Endothelial cell of umbilical vein (primary cell): ENCODE measurements at regions of chr17 and their contacts with region 1.

Region 1: DNA sequence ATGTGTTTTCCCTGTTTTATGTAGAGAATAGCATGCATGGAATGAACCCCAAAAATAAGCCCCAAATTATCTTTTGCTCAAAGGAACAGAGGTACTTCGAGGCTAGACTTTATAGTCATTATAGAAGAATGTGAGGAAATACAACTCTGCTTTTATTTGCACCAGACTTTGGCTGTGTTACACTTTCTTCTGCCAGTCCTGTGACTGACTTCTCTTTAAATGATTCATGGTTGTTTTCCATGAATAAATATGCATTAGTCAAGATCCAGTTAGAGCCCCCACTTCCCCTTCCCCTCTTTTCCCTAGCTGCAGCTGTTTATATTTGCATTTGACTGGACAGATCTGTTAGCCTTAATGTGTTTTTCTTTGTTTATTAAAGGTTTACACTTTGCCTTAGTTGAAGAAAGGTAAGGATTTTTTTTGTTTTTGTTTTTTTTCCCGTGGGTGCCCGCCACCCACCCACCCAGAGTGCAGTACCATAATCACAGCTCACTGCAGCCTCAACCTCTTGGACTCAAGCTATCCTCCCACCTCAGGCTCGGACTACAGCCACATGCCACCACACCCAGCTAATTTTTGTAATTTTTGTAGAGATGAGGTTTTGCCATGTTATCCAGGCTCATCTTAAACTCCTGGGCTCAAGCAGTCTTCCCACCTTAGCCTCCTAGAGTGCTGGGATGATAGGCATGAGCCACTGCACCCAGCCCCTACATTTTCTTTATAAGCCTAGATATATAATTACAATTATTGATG is 152.6 kb downstream of the CYB561 start:
- DNase-seq: peak; percentile 93
- H3K4me3 ChIP-seq: no peak overlapping the region
- H3K27ac ChIP-seq: peak overlapping the region; percentile 18
- H3K4me1 ChIP-seq: peaks cover 30% of the 10 kb centered on the region
- H3K27me3 ChIP-seq: no peaks in the 10 kb centered on the region
- CTCF ChIP-seq: no peak
- POLR2A ChIP-seq: no peak

Region 2: DNA sequence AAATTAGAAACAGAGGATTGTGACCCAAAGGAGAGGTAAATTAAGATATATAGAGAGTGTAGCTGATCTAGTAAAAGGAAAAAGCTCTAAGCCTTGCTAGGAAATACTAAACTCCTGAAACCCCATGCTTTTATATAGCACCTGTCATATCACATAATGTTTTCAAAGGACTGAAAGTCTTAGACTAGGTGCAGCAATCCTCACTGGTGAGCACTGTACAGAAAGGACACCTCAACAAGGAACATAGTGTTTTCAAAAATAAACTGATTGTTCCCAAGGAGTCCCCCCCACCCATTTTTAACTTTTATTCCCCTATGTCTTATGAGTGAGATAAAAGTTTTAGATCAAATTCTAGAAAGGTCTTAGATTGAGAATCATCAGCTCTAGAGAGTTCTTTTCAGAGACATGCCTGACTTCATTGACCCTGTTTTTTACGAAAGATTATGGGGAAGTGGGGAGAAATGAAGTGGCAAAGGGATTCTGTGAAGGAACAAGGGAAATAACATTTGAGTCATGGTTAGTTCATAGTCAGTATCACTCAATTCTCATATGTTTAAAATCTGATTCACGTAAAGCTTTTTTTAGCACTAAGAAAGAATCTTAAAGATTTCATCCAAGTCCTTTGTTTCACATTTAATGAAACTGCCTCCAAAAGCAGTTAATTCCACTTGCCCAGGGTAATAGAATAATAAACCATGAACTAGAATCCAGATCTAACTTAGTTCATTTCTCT is 13.8 kb before region 1 on chr17:
- CTCF ChIA-PET with region 1: interaction called, 10 read pairs
- POLR2A ChIA-PET with region 1: no interaction called
- dilution Hi-C with region 1: no loop called
- intact Hi-C with region 1: loop called (anchors 2 kb)
- DNase-seq: peak; percentile 89
- H3K4me3 ChIP-seq: no peak overlapping the region
- H3K27ac ChIP-seq: peak overlapping the region; percentile 65
- H3K4me1 ChIP-seq: peaks cover 38% of the 10 kb centered on the region
- H3K27me3 ChIP-seq: no peaks in the 10 kb centered on the region
- CTCF ChIP-seq: no peak
- POLR2A ChIP-seq: no peak